Stomach (tissue), 19 donors: ENCODE measurements at regions of chr11 and their contacts with region 1.

Region 1: DNA sequence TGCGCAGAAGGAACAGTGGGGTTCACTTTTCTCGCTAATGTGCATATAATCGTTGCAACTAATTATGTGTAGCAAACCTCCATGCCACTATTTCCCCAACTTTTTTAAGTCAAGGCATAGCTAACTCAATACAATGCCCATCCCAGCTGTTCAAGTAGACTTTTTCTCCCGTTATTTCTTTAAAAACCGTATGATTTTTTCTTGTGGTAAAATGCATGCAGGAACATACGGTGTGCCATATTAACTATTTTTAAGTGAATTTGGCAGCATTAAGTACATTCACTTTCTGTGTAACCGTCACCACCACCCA is 2.8 kb upstream of the DUSP8 start:
- DNase-seq: no peak
- H3K4me3 ChIP-seq: peak overlapping the region in 1 of 4 donors; percentile 60
- H3K27ac ChIP-seq: peak overlapping the region in 1 of 5 donors; percentile 95
- H3K4me1 ChIP-seq: peaks cover 31 to 43% (median 40%) of the 10 kb centered on the region in 4 donors
- H3K27me3 ChIP-seq: peaks cover 0 to 63% (median 11%) of the 10 kb centered on the region in 3 donors
- CTCF ChIP-seq: no peak
- EP300 ChIP-seq: no peak
- POLR2A ChIP-seq: no peak

Region 2: GRCh38 chr11:1502954-1503707 is 71.8 kb before region 1 on chr11:
- intact Hi-C with region 1: no loop called
- DNase-seq: peak; percentile 45 to 76
- H3K4me3 ChIP-seq: no peak overlapping the region
- H3K27ac ChIP-seq: peak overlapping the region in 1 of 5 donors; percentile 34
- H3K4me1 ChIP-seq: peaks cover 23 to 75% (median 64%) of the 10 kb centered on the region in 4 donors
- H3K27me3 ChIP-seq: no peaks in the 10 kb centered on the region
- CTCF ChIP-seq: no peak
- EP300 ChIP-seq: no peak
- POLR2A ChIP-seq: no peak

Region 3: DNA sequence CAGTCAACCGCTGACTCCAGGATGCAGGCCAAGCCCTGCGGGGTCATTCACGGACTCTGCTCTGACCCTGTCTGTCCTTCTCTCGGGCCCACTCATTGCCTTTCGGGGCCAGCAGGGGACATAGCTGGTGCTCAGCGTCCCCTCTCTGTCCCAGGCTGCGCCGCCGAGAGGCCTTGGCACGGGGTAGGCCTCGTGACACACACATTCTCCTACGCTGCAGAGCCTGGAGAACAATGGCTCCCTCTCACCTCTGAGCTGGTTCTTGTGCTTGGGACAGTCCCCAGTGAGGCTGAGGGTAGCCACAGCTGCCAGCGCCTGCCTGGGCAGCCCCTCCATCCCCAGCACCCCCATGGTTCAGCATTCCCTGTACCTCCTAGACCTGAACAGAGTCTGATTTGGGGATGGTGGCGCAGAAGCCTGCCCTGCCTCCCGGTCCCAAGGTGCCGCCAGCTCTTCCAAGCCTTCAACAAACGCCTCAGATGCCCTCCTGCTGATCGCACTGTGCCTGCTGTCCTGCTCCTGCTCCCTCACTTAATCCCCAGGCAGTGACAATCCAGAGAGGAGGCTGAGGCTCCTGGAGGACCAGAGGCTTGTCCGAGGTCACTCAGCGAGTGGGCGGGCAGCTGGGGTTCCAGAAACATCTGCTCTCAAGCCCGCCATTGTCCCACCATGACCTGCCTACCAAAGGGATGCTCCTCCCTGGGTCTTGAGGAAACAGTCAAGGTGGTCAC is 33.2 kb before region 1 on chr11:
- intact Hi-C with region 1: loop called (anchors 5 kb)
- DNase-seq: no peak
- H3K4me3 ChIP-seq: no peak overlapping the region
- H3K27ac ChIP-seq: no peak overlapping the region
- H3K4me1 ChIP-seq: peaks cover 9 to 16% (median 14%) of the 10 kb centered on the region in 4 donors
- H3K27me3 ChIP-seq: peaks cover 0 to 46% (median 14%) of the 10 kb centered on the region in 3 donors
- CTCF ChIP-seq: no peak
- EP300 ChIP-seq: no peak
- POLR2A ChIP-seq: no peak